ENCODE measurements at regions of chr4 and their contacts with region 1.

Region 1: DNA sequence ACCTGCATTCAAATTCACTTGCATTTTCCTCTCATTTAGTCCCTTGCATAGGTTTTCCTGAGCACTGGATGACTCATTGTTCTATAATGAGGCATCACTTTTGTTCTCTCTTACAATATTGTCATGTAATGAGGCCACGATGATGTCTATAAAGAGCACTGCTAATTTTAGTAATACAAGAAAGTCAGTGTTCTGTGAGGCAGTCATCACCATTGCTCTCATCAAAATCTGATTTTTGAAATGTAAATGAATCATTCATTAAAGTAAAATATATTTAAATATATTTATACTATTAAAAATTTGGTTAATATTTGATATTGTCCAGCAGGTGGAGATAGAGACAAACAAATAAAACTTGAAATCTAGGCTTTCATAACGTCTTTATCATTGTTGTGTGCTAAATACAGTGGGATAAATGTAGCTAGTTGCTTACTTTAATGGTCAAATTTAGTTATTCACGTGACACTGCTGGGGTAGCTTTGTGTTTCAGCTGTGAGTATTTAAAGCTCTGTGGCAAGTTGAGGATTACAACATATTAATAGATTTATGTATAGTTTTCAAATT is 15.4 kb downstream of the HMGB2 start:
- DNase-seq: no peak
- ATAC-seq: peak; percentile 62
- H3K4me3 ChIP-seq: no peak overlapping the region
- H3K27ac ChIP-seq: no peak overlapping the region
- H3K4me1 ChIP-seq: no peaks in the 10 kb centered on the region
- H3K27me3 ChIP-seq: no peaks in the 10 kb centered on the region
- CTCF ChIP-seq: peak; percentile 51

Region 2: GRCh38 chr4:172601195-172601594 is 717.5 kb before region 1 on chr4:
- intact Hi-C with region 1: no loop called
- DNase-seq: no peak
- ATAC-seq: no peak
- H3K4me3 ChIP-seq: no peak overlapping the region
- H3K27ac ChIP-seq: no peak overlapping the region
- H3K4me1 ChIP-seq: no peaks in the 10 kb centered on the region
- H3K27me3 ChIP-seq: no peaks in the 10 kb centered on the region
- CTCF ChIP-seq: no peak

Region 3: DNA sequence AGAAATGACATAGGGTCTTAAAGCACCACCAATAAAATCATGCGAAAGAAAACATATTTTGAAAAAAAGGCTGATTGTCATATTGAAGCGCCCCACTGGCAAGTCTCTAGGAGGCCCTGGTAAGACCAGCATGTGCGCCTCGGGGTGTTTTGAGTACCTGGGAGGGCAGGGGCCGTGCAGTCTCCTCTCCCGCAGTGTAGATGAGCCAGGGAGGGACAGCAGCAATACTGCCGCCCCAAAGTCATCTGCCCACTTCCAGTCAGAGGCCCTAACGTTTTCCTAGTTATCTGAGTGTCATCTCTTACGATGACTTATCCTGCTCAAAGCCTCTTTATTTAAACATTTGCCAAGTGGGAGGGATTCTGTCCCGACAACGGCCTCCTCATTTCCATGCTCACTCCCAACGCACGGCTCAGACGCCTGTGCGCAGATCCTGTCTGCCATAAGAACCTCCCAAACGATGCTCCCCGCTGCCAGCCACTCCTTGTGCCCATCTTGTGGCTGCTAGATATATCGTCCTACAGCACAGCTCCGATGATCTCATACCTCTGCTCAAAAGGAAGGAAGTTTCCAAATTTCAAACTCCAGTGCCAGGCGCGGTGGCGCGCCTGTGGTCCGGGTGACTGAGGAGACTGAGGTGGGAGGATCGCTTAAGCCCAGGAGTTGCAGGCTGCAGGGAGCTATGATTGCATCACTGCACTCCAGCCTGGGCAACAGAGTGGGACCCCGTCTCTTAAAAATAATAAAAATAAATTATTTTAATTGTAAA is 97.3 kb after region 1 on chr4:
- intact Hi-C with region 1: loop called (anchors 5 kb)
- DNase-seq: peak; percentile 86
- ATAC-seq: peak; percentile 88
- H3K4me3 ChIP-seq: no peak overlapping the region
- H3K27ac ChIP-seq: peak overlapping the region; percentile 55
- H3K4me1 ChIP-seq: peaks cover 8% of the 10 kb centered on the region
- H3K27me3 ChIP-seq: no peaks in the 10 kb centered on the region
- CTCF ChIP-seq: peak; percentile 9